ENCODE measurements at regions of chr3 and their contacts with region 1.

Region 1: GRCh38 chr3:48656061-48656840 is 6.4 kb downstream of the CELSR3 start:
- DNase-seq: peak; percentile 89
- ATAC-seq: peak; percentile 79
- H3K4me3 ChIP-seq: peak overlapping the region in 4 of 5 experiments; percentile 44 to 66 (median 62)
- H3K4me3 Mint-ChIP-seq: peak overlapping the region; percentile 83
- H3K27ac ChIP-seq: peak overlapping the region in 1 of 2 donors; percentile 24
- H3K27ac Mint-ChIP-seq: peak overlapping the region; percentile 73
- H3K4me1 ChIP-seq: peaks cover 9 to 22% of the 10 kb centered on the region in 2 donors
- H3K4me1 Mint-ChIP-seq: peaks cover 17% of the 10 kb centered on the region
- H3K27me3 ChIP-seq: peaks cover 0 to 42% (median 6%) of the 10 kb centered on the region in 4 experiments
- H3K27me3 Mint-ChIP-seq: peaks cover 9% of the 10 kb centered on the region
- CTCF ChIP-seq: peak; percentile 83

Region 2: DNA sequence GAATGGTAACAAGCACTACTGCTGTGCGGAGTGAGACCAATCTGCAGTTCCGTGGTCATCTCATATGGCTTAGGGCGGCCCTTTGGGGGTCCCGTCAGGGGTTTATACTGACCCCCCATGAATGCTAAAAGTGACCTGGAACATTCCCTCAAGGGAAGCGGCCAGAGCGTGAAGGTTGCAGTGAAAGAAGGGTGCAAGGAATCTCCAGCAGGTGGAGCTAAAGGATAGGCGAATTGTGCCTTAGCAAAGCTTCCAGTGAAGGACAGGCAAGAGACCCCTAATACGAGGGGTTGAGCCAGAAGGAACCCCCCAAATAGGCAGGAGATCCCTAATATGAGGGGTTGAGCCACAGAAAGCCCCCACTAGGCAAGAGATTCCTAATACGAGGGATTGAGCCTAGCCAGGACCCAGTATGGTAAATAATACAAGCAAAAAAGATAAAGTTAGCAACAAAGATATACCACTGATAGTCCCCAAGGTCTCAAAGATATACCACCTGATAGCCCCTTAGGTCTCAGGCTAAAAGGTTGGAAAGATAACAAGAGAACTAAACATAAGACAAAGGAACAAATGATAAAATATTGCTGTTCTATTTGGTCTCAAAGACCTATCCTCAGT is 382.5 kb before region 1 on chr3:
- CTCF ChIA-PET with region 1: no interaction called
- POLR2A ChIA-PET with region 1: no interaction called
- intact Hi-C with region 1: no loop called
- DNase-seq: peak; percentile 78
- ATAC-seq: peak; percentile 63
- H3K4me3 ChIP-seq: no peak overlapping the region
- H3K4me3 Mint-ChIP-seq: no peak overlapping the region
- H3K27ac ChIP-seq: no peak overlapping the region
- H3K27ac Mint-ChIP-seq: no peak overlapping the region
- H3K4me1 ChIP-seq: no peaks in the 10 kb centered on the region
- H3K4me1 Mint-ChIP-seq: no peaks in the 10 kb centered on the region
- H3K27me3 ChIP-seq: no peaks in the 10 kb centered on the region
- H3K27me3 Mint-ChIP-seq: no peaks in the 10 kb centered on the region
- CTCF ChIP-seq: peak; percentile 79

Region 3: GRCh38 chr3:48609088-48610005 is 46.9 kb before region 1 on chr3 and contains the start of gene UQCRC1:
- CTCF ChIA-PET with region 1: no interaction called
- POLR2A ChIA-PET with region 1: no interaction called
- intact Hi-C with region 1: loop called (anchors 2 kb)
- DNase-seq: peak; percentile 95
- ATAC-seq: peak; percentile 99
- H3K4me3 ChIP-seq: peak within 1 kb of the TSS; percentile 68 to 99 (median 94)
- H3K4me3 Mint-ChIP-seq: peak within 1 kb of the TSS; percentile 100
- H3K27ac ChIP-seq: peak within 1 kb of the TSS; percentile 72 to 90
- H3K27ac Mint-ChIP-seq: peak within 1 kb of the TSS; percentile 98
- H3K4me1 ChIP-seq: peaks cover 10 to 14% of the 10 kb centered on the region in 2 donors
- H3K4me1 Mint-ChIP-seq: peaks cover 15% of the 10 kb centered on the region
- H3K27me3 ChIP-seq: no peaks in the 10 kb centered on the region
- H3K27me3 Mint-ChIP-seq: no peaks in the 10 kb centered on the region
- CTCF ChIP-seq: peak; percentile 81
- total RNA-seq, gene UQCRC1: 98.9 and 99.9 TPM in 2 replicates

Region 4: DNA sequence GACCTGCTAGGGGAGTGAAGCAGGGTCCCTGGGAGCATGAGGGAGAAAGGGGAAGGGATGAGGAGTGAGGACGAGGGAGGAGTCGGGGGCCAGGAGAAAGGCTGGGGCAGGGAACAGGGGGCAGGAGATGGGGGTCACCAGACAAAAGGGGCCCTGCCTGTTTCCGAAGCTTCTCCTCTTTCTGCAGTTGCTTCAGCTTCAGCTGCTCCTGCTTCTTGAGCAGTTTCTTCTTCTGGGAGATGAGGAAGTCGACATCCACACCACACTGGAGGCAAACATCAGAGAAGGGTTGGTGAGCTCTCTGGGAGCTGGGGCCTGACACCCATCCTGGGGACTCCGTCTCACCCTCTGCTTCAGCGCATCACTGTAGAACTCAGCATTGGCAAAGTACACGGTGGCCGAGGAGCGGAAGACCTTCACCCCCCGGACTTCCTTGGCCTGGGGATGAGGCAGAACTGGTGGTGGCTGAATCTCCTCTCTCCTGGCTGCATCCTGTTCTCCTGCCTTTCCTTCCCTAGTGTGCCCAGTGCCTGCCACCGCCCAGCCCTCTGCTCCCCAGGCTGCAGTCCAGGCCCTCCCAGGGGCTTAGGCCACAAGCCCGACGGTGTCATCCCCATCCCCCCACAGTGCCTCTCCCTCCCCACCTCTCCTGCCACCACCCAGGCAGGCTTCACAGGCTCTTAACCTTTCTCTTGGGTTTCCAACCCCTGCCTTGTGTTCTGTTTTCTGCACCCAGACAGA is 27.8 kb before region 1 on chr3:
- CTCF ChIA-PET with region 1: no interaction called
- POLR2A ChIA-PET with region 1: no interaction called
- intact Hi-C with region 1: no loop called
- DNase-seq: no peak
- ATAC-seq: no peak
- H3K4me3 ChIP-seq: no peak overlapping the region
- H3K4me3 Mint-ChIP-seq: no peak overlapping the region
- H3K27ac ChIP-seq: no peak overlapping the region
- H3K27ac Mint-ChIP-seq: no peak overlapping the region
- H3K4me1 ChIP-seq: no peaks in the 10 kb centered on the region
- H3K4me1 Mint-ChIP-seq: no peaks in the 10 kb centered on the region
- H3K27me3 ChIP-seq: no peaks in the 10 kb centered on the region
- H3K27me3 Mint-ChIP-seq: no peaks in the 10 kb centered on the region
- CTCF ChIP-seq: no peak

Region 5: DNA sequence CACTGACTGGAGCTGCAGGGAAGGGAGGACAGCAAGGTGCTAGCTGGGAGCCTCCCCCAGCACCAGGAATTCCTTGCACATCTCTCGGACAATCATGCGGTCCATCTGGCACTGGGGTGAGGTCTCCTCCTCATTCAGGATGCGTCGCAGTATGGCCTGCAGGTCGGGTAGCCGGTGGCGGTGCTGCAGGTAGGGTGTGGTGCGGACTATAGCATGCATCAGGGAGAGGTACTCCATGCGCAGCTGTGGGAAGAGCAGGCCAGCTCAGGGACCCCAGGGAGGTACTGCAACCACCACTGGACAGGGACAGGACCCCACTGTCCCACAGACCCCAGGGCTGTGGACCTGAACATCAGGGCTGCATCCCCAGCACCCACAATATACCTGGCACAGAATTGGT is 18.3 kb after region 1 on chr3:
- CTCF ChIA-PET with region 1: no interaction called
- POLR2A ChIA-PET with region 1: no interaction called
- intact Hi-C with region 1: no loop called
- DNase-seq: no peak
- ATAC-seq: no peak
- H3K4me3 ChIP-seq: no peak overlapping the region
- H3K4me3 Mint-ChIP-seq: no peak overlapping the region
- H3K27ac ChIP-seq: no peak overlapping the region
- H3K27ac Mint-ChIP-seq: no peak overlapping the region
- H3K4me1 ChIP-seq: peaks cover 15 to 22% of the 10 kb centered on the region in 2 donors
- H3K4me1 Mint-ChIP-seq: peaks cover 17% of the 10 kb centered on the region
- H3K27me3 ChIP-seq: no peaks in the 10 kb centered on the region
- H3K27me3 Mint-ChIP-seq: no peaks in the 10 kb centered on the region
- CTCF ChIP-seq: no peak

Region 6: GRCh38 chr3:48685602-48686511 is 29.6 kb after region 1 on chr3 and contains the start of gene NCKIPSD:
- CTCF ChIA-PET with region 1: interaction called, 3 read pairs
- POLR2A ChIA-PET with region 1: no interaction called
- intact Hi-C with region 1: loop called (anchors 1 kb)
- DNase-seq: peak; percentile 96
- ATAC-seq: peak; percentile 91
- H3K4me3 ChIP-seq: peak within 1 kb of the TSS in 4 of 5 experiments; percentile 58 to 75 (median 70)
- H3K4me3 Mint-ChIP-seq: peak within 1 kb of the TSS; percentile 89
- H3K27ac ChIP-seq: peak within 1 kb of the TSS; percentile 40 to 68
- H3K27ac Mint-ChIP-seq: peak within 1 kb of the TSS; percentile 92
- H3K4me1 ChIP-seq: peaks cover 10 to 25% of the 10 kb centered on the region in 2 donors
- H3K4me1 Mint-ChIP-seq: peaks cover 22% of the 10 kb centered on the region
- H3K27me3 ChIP-seq: no peaks in the 10 kb centered on the region
- H3K27me3 Mint-ChIP-seq: no peaks in the 10 kb centered on the region
- CTCF ChIP-seq: peak; percentile 91
- total RNA-seq, gene NCKIPSD: 19.1 and 19.7 TPM in 2 replicates

Region 7: DNA sequence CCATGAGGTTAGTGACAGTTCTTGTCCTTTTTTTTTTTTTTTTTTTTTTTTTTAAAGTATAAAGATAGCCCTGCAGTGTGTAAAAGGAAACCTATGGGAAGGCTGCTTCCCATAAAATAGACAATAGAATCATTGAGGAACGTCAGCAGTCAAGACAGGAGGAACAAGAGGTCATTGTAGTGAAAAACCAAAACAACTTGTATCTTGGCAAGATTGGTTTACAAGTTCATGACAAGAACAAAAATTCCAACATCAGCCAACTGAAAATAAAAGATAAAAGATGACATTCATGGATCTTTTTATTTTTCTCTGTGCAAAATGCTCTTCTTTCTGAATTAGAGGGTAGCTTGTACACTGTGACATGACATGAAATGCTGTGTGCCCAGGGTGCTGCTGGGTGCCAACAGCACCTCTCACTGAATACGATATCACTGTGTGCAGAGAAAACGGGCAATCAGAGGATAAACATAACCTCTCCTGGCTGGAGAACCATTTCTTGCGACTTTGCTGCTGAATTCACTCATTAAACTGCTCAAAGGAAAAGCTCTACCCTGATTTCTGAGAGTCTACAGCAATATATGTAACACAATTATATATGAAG is 90.9 kb after region 1 on chr3:
- CTCF ChIA-PET with region 1: no interaction called
- POLR2A ChIA-PET with region 1: no interaction called
- intact Hi-C with region 1: no loop called
- DNase-seq: no peak
- ATAC-seq: no peak
- H3K4me3 ChIP-seq: no peak overlapping the region
- H3K4me3 Mint-ChIP-seq: no peak overlapping the region
- H3K27ac ChIP-seq: no peak overlapping the region
- H3K27ac Mint-ChIP-seq: no peak overlapping the region
- H3K4me1 ChIP-seq: no peaks in the 10 kb centered on the region
- H3K4me1 Mint-ChIP-seq: no peaks in the 10 kb centered on the region
- H3K27me3 ChIP-seq: no peaks in the 10 kb centered on the region
- H3K27me3 Mint-ChIP-seq: no peaks in the 10 kb centered on the region
- CTCF ChIP-seq: no peak